Mammary epithelial cell (primary cell): ENCODE measurements at regions of chr1 and their contacts with region 1.

Region 1: DNA sequence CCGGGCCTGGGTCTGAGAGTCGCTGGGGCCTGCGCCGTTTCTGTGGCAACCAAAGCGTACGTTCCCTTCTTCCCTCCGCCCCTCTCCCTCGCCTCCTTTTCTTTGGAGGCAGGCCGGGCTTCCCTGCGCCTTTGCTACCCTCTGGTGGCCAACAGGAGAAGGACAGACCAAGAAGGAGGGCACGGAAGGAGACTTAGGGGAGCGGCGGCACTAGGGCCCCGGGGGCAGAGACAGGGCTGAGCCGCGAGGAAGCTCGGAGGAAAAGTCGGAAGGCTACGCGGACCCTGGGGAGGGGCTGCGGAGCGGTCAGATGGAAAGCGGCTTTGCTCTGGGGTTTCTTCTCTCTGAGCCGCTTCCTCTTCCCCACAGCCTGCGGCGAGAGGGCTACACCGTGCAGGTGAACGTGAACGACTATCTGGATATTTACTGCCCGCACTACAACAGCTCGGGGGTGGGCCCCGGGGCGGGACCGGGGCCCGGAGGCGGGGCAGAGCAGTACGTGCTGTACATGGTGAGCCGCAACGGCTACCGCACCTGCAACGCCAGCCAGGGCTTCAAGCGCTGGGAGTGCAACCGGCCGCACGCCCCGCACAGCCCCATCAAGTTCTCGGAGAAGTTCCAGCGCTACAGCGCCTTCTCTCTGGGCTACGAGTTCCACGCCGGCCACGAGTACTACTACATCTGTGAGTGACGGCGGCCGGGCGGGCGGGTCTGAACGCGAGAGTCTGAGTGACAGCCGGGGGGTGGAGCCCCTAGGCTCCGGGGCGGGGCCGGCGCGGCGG is 6.3 kb downstream of the EFNA3 start:
- DNase-seq: peak; percentile 90
- H3K4me3 ChIP-seq: peak overlapping the region; percentile 71 to 86 (median 73)
- H3K27ac ChIP-seq: peak overlapping the region; percentile 70
- H3K4me1 ChIP-seq: peaks cover 46% of the 10 kb centered on the region
- H3K27me3 ChIP-seq: peaks cover 20% of the 10 kb centered on the region
- CTCF ChIP-seq: peak; percentile 75 to 89

Region 2: DNA sequence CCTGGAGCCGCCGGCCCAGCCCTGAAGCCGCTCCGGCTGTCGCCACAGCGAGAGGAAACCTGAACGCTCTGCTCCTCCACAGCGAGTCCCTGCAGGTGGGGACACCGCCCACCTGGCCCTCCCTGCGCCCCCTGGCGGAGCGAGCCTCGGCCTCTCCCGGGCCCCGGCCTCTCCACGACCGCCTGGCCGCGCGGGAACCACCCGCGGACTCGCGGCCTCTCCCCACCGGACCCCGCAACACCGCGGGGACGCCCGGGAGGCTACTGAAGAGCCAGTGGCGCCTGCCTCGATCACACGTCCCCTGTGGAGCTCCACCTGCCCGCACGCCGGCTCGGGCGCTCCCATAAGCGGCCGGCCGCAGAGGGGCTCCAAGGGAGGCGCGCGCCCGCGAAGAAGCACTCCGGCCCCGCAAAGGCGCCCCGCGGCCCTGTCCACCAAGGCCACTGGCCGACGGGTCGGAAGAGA is 324.4 kb before region 1 on chr1:
- CTCF ChIA-PET with region 1: no interaction called
- dilution Hi-C with region 1: no loop called
- in situ Hi-C with region 1: no loop called
- intact Hi-C with region 1: loop called (anchors 10 kb)
- DNase-seq: peak; percentile 30
- H3K4me3 ChIP-seq: peak overlapping the region; percentile 32 to 37 (median 33)
- H3K27ac ChIP-seq: no peak overlapping the region
- H3K4me1 ChIP-seq: peaks cover 8% of the 10 kb centered on the region
- H3K27me3 ChIP-seq: no peaks in the 10 kb centered on the region
- CTCF ChIP-seq: peak; percentile 39 to 68

Region 3: DNA sequence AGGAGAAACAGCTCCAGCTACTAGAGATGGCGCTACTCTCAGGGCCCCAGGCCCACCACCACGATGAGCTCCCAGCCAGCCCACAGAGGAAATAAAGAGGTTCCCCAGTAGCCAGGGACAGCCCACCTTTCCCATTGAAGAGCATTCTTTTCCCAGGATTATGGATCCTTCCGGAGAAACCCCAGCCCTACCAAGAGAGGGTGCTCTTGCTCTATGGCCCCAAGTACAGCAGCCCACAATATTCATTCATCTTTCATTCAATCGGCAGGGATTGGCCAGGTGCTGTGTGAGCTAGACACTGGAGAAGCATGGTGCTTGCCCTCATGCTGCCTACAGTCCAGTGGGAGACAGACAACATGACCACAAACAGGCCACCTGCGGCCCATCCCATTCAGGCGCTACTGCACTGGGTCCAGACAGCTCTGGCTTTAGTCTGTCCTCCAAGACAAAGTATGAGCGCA is 178.3 kb before region 1 on chr1:
- CTCF ChIA-PET with region 1: no interaction called
- dilution Hi-C with region 1: no loop called
- in situ Hi-C with region 1: no loop called
- intact Hi-C with region 1: loop called (anchors 1 kb)
- DNase-seq: peak; percentile 23
- H3K4me3 ChIP-seq: no peak overlapping the region
- H3K27ac ChIP-seq: no peak overlapping the region
- H3K4me1 ChIP-seq: no peaks in the 10 kb centered on the region
- H3K27me3 ChIP-seq: no peaks in the 10 kb centered on the region
- CTCF ChIP-seq: peak; percentile 50 to 84

Region 4: DNA sequence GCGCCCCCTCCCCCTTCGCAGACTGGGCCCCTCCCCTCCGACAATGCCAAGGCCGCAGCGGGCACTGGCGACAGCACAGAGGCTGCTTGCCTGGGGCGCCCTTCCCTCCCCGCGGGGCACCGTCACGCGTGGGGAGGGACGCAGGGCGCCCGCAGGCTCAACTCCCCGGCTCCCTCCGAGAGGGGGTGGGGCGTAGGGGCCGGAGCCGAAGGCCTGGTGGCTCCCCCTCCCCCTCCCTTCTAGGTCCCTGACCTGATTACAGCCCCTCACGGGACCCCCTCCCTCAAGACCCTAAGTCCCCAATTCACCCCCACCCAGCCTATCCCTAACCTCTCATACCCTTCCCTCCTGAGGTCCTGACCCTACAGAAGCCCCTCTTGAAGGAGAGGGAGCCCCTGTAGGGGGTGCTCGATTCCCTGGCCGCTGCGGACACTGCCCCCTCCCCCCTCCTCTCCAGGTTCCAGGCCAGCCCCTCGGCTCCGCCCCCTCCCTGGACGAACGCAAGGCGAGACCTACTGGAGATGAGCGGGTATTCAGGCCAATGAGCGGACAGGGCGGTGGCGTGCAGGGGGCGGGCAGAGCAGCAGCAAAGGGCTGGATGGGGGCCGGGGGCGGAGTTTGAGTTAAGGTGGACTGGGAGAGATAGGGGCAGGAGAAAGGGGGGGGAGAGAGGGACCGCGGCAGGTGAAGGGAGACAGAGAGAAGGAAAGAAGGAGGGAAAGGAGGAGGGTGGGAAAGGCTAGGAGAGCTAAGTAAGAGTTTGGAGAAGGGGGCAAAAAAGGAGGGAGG is 83.0 kb before region 1 on chr1:
- CTCF ChIA-PET with region 1: no interaction called
- dilution Hi-C with region 1: no loop called
- in situ Hi-C with region 1: no loop called
- intact Hi-C with region 1: loop called (anchors 1 kb)
- DNase-seq: peak; percentile 99
- H3K4me3 ChIP-seq: peak overlapping the region; percentile 52 to 85 (median 62)
- H3K27ac ChIP-seq: peak overlapping the region; percentile 70
- H3K4me1 ChIP-seq: peaks cover 35% of the 10 kb centered on the region
- H3K27me3 ChIP-seq: no peaks in the 10 kb centered on the region
- CTCF ChIP-seq: peak in 1 of 2 donors; percentile 60

Region 5: DNA sequence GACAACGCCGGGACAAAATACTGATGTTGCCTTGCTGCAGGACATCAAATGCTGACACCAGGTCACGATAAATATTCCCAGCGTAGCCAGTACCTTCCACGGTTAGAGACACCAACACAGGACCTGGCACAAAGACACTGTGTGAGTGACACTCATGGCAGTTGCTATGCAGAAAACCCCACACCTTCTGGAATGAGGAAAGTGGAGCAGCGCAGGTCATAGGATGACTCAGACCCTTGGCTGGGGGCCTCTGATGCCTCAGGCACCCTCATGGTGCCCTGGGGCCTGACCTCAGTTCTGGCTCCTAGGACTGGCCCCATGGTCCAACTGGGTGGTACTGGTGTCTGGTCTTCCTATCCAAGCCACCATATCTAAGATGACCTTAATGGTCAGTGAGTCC is 58.3 kb before region 1 on chr1:
- CTCF ChIA-PET with region 1: no interaction called
- dilution Hi-C with region 1: no loop called
- in situ Hi-C with region 1: no loop called
- intact Hi-C with region 1: no loop called
- DNase-seq: no peak
- H3K4me3 ChIP-seq: no peak overlapping the region
- H3K27ac ChIP-seq: no peak overlapping the region
- H3K4me1 ChIP-seq: peaks cover 21% of the 10 kb centered on the region
- H3K27me3 ChIP-seq: no peaks in the 10 kb centered on the region
- CTCF ChIP-seq: no peak

Region 6: GRCh38 chr1:155044812-155045690 is 39.9 kb before region 1 on chr1:
- CTCF ChIA-PET with region 1: no interaction called
- dilution Hi-C with region 1: no loop called
- in situ Hi-C with region 1: no loop called
- intact Hi-C with region 1: loop called (anchors 1 kb)
- DNase-seq: peak; percentile 55
- H3K4me3 ChIP-seq: no peak overlapping the region
- H3K27ac ChIP-seq: no peak overlapping the region
- H3K4me1 ChIP-seq: peaks cover 20% of the 10 kb centered on the region
- H3K27me3 ChIP-seq: no peaks in the 10 kb centered on the region
- CTCF ChIP-seq: peak; percentile 76 to 84

Region 7: DNA sequence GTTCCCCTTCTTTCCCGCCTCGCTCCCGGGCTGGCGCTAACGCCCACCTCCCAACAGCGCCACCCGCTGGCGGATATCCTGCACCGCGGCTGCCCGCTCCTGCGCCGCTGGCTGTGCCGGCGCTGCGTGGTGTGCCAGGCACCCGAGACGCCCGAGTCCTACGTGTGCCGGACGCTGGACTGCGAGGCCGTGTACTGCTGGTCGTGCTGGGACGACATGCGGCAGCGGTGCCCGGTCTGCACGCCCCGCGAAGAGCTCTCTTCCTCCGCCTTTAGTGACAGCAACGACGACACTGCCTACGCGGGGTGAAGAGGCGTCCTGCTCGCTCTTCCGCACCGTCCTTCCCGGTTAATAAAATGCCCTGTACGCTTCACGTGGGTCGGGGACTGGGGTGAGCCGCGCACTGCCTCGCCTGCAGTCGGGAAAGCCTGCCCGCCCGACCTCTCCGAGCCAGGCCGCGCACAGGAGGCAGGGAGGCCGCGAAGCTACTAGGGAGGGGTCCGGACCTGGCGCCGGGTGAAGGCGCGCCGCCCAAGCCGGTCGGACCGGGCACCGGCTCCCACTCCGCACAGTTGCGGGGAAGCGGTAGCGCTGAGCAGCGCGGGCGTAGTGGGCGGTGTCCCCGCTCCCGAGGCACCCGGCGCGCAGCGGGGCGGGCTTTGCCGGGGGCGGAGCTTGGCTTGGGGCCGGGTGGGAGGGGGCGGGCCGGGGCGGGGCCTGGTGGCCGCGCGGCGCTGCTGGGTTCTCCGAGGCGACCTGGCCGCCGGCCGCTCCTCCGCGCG is 34.2 kb before region 1 on chr1 and contains the start of gene ADAM15:
- CTCF ChIA-PET with region 1: interaction called, 3 read pairs
- dilution Hi-C with region 1: no loop called
- in situ Hi-C with region 1: no loop called
- intact Hi-C with region 1: loop called (anchors 1 kb)
- DNase-seq: peak; percentile 73
- H3K4me3 ChIP-seq: peak within 1 kb of the TSS; percentile 88 to 96 (median 90)
- H3K27ac ChIP-seq: peak within 1 kb of the TSS; percentile 63
- H3K4me1 ChIP-seq: peaks cover 31% of the 10 kb centered on the region
- H3K27me3 ChIP-seq: no peaks in the 10 kb centered on the region
- CTCF ChIP-seq: peak; percentile 72 to 95
- total RNA-seq, gene ADAM15: 111 to 127 TPM

Region 8: DNA sequence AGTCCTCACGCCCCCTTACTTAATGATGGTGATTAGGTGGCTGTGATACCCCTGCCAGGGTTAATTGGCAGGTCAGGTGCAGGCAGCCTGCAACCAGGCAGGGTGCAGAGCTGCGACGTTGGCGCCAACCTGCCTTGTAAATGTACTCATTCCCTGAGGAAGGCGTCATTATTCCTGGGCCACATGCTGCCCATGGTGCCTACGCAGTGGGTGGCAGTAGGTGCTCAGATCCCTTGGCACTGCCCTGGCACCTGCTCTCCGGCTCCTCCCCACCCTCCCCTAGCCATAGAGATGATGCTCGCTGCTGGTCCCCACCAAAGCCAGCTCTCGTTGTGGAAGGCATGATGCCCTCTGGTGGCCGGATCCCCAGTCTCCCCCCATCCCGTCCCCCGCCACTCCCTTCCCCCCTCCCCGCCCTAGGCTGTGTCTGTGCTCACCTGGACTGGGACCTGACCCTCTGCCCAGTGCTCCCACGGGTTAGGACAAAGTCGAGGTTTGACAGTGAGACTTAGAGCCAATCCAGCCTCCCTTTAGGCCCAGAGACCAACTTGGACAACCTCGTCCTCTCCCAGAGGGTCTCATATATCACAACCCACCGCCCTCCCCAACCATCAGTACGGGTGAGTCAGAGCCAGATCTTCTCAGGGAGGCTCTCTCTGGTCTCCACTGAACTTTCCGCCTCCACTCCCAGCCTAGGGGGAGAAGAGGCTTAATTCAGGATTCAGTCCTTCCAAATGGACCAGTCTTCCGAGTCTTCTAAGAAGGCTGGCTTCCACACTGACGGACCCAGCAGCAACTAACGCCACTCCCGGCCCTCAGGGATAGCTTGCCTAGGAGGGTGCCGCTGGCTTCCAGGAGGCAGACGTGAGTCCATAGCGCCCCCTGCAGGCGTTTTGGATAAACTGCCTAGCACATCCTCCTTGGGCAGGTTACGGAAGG is 82.5 kb after region 1 on chr1:
- CTCF ChIA-PET with region 1: interaction called, 11 read pairs
- dilution Hi-C with region 1: no loop called
- in situ Hi-C with region 1: loop called in 1 of 2 experiments (anchors 5 kb)
- intact Hi-C with region 1: no loop called
- DNase-seq: peak; percentile 71
- H3K4me3 ChIP-seq: peak overlapping the region in 2 of 3 experiments; percentile 3 to 5
- H3K27ac ChIP-seq: no peak overlapping the region
- H3K4me1 ChIP-seq: peaks cover 11% of the 10 kb centered on the region
- H3K27me3 ChIP-seq: no peaks in the 10 kb centered on the region
- CTCF ChIP-seq: peak; percentile 91 to 96